ENCODE measurements at regions of chr1 and their contacts with region 1.

Region 1: GRCh38 chr1:54199765-54200518 is at the starts of genes CYB5RL and MRPL37:
- DNase-seq: peak; percentile 91
- ATAC-seq: peak; percentile 98
- H3K4me3 ChIP-seq: peak within 1 kb of the TSS; percentile 88
- H3K27ac ChIP-seq: peak within 1 kb of the TSS; percentile 68
- H3K4me1 ChIP-seq: 0 out of 2 replicates have a peak, but pooled peaks cover 5% of the 10 kb centered on the region
- H3K27me3 ChIP-seq: no peaks in the 10 kb centered on the region
- CTCF ChIP-seq: no peak
- EP300 ChIP-seq: no peak
- POLR2A ChIP-seq: peak; percentile 95
- RAD21 ChIP-seq: no peak
- polyA plus RNA-seq, gene CYB5RL: 3.1 to 5.0 TPM
- polyA plus RNA-seq, gene MRPL37: 41.4 to 109 TPM

Region 2: DNA sequence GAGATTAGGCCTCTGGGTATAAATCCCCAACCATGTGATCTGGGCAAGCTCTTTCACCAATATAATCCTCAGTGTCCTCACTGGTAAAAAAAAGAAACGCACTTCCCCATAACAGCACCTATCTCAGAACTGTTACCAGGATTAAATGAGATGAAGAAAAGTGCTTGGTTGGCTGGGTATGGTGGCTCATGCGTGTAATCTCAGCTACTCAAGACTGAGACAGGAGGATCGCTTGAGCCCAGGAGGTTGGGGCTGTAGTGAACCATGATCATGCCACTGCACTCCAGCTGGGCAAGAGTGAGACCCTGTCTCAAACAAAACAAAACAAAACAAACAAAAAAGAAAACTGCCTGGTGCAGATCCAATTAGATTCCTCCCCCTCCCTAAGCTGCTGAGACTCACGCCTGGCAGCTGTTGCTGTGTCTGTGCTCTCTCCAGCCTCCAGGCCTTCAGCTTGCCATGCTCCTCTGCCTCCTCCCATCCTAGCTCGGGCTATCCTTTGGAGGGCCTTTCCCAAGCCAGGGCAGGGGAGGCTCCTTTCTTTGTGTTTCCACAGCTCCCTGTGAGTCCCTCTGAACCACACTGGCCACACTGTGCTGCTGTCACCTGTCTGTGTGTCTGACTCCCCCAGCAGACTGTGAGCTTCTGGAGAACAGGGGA is 19.1 kb before region 1 on chr1:
- CTCF ChIA-PET with region 1: interaction called, 12 read pairs
- POLR2A ChIA-PET with region 1: interaction called, 3 read pairs
- RAD21 ChIA-PET with region 1: interaction called, 3 read pairs
- SMC1A ChIA-PET with region 1: interaction called, 4 read pairs
- in situ Hi-C with region 1: no loop called
- intact Hi-C with region 1: no loop called
- DNase-seq: no peak
- ATAC-seq: no peak
- H3K4me3 ChIP-seq: no peak overlapping the region
- H3K27ac ChIP-seq: no peak overlapping the region
- H3K4me1 ChIP-seq: no peaks in the 10 kb centered on the region
- H3K27me3 ChIP-seq: no peaks in the 10 kb centered on the region
- CTCF ChIP-seq: no peak
- EP300 ChIP-seq: no peak
- POLR2A ChIP-seq: no peak
- RAD21 ChIP-seq: no peak